MCF 10A (cell line): ENCODE measurements at regions of chr12 and their contacts with region 1.

Region 1: DNA sequence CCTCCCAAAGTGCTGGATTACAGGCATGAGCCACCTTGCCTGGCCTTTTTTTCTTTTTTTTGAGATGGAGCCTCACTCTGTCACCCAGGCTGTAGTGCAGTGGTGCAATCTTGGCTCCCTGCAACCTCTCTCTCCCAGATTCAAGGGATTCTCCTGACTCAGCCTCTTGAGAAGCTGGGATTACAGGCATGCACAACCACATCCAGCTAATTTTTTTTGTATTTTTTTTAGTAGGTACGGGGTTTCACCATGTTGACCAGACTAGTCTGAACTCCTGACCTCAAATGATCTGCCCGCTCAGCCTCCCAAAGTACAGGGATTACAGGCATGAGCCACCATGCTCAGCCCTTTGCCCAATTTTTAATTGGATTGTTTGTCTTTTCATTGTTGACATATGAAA is 58.0 kb downstream of the SINHCAF start:
- DNase-seq: peak; percentile 11
- H3K4me3 Mint-ChIP-seq: no peak overlapping the region
- H3K27ac Mint-ChIP-seq: no peak overlapping the region
- H3K4me1 Mint-ChIP-seq: no peaks in the 10 kb centered on the region
- H3K27me3 Mint-ChIP-seq: no peaks in the 10 kb centered on the region
- CTCF ChIP-seq: no peak

Region 2: DNA sequence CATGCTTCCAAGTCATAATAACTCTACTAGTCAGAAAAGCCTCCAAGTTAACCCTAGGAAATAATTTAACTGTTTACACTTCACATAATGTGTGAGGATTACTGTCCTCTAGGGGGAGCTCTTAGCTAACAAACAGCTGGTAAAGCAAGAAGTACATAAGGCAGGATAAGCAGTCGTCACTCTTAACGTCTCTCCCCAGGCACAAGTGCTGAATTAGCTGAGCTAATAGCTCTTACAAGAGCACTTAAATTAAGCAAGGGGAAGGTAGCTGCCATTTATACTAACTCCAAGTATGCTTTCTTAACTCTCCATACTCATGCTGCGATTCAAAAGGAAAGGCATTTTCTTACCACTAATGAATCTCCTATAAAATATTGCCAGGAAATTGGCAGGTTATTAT is 420.7 kb before region 1 on chr12:
- CTCF ChIA-PET with region 1: interaction called, 44 read pairs
- POLR2A ChIA-PET with region 1: interaction called, 4 read pairs
- intact Hi-C with region 1: loop called (anchors 1 kb)
- DNase-seq: peak; percentile 81
- H3K4me3 Mint-ChIP-seq: no peak overlapping the region
- H3K27ac Mint-ChIP-seq: no peak overlapping the region
- H3K4me1 Mint-ChIP-seq: peaks cover 7% of the 10 kb centered on the region
- H3K27me3 Mint-ChIP-seq: no peaks in the 10 kb centered on the region
- CTCF ChIP-seq: peak; percentile 87

Region 3: GRCh38 chr12:31238764-31239387 is 29.1 kb before region 1 on chr12:
- CTCF ChIA-PET with region 1: interaction called, 23 read pairs
- POLR2A ChIA-PET with region 1: no interaction called
- intact Hi-C with region 1: no loop called
- DNase-seq: peak; percentile 81
- H3K4me3 Mint-ChIP-seq: peak overlapping the region; percentile 46
- H3K27ac Mint-ChIP-seq: no peak overlapping the region
- H3K4me1 Mint-ChIP-seq: peaks cover 19% of the 10 kb centered on the region
- H3K27me3 Mint-ChIP-seq: peaks cover 49% of the 10 kb centered on the region
- CTCF ChIP-seq: peak; percentile 62

Region 4: GRCh38 chr12:31245822-31246469 is 22.0 kb before region 1 on chr12:
- CTCF ChIA-PET with region 1: interaction called, 65 read pairs
- POLR2A ChIA-PET with region 1: interaction called, 11 read pairs
- intact Hi-C with region 1: no loop called
- DNase-seq: no peak
- H3K4me3 Mint-ChIP-seq: no peak overlapping the region
- H3K27ac Mint-ChIP-seq: peak overlapping the region; percentile 44
- H3K4me1 Mint-ChIP-seq: peaks cover 6% of the 10 kb centered on the region
- H3K27me3 Mint-ChIP-seq: no peaks in the 10 kb centered on the region
- CTCF ChIP-seq: no peak

Region 5: GRCh38 chr12:31288381-31288780 is 20.4 kb after region 1 on chr12:
- CTCF ChIA-PET with region 1: interaction called, 31 read pairs
- POLR2A ChIA-PET with region 1: no interaction called
- intact Hi-C with region 1: no loop called
- DNase-seq: no peak
- H3K4me3 Mint-ChIP-seq: no peak overlapping the region
- H3K27ac Mint-ChIP-seq: no peak overlapping the region
- H3K4me1 Mint-ChIP-seq: no peaks in the 10 kb centered on the region
- H3K27me3 Mint-ChIP-seq: no peaks in the 10 kb centered on the region
- CTCF ChIP-seq: no peak

Region 6: GRCh38 chr12:31300341-31300740 is 32.4 kb after region 1 on chr12:
- CTCF ChIA-PET with region 1: interaction called, 10 read pairs
- POLR2A ChIA-PET with region 1: no interaction called
- intact Hi-C with region 1: no loop called
- DNase-seq: no peak
- H3K4me3 Mint-ChIP-seq: no peak overlapping the region
- H3K27ac Mint-ChIP-seq: no peak overlapping the region
- H3K4me1 Mint-ChIP-seq: peaks cover 21% of the 10 kb centered on the region
- H3K27me3 Mint-ChIP-seq: no peaks in the 10 kb centered on the region
- CTCF ChIP-seq: no peak

Region 7: DNA sequence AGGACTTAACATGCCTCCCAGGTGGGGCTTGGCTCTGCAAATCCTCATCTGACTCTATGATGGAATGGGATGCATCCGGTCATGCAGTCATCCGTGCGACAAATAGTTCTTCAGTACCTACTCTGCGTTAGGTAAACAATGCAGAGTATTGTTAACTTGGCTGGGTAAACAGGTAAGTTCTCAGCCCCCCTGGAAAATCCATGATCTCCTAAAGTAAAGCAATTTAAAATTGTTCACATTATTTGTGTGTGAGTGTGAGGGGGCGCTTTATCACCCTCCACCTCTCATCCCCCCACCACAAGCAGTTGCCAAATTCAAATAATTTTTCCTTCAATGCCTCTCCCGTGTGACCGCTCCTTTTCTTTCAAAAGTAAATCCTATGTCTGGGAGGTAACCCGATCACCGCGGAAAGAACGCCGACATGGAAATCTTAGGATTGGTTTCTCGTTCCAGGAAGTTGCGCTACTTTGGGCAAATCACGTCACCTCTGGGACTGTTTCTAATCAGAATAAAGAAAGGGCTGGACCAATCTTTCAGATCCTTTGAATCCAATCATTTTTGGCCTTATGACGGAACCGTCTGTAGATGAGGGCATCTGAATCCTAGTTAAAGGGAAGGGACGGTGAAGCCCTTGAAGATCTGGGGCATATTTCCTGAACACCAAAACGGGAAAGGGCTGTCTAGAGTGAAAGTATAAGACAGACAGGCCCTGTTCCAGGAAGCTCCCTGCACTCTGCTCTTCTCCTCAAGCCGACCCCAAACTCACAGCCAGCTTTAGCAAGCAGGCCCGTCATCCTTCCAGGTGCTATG is 102.0 kb after region 1 on chr12:
- CTCF ChIA-PET with region 1: interaction called, 5 read pairs
- POLR2A ChIA-PET with region 1: interaction called, 5 read pairs
- intact Hi-C with region 1: loop called (anchors 10 kb)
- DNase-seq: no peak
- H3K4me3 Mint-ChIP-seq: no peak overlapping the region
- H3K27ac Mint-ChIP-seq: no peak overlapping the region
- H3K4me1 Mint-ChIP-seq: no peaks in the 10 kb centered on the region
- H3K27me3 Mint-ChIP-seq: no peaks in the 10 kb centered on the region
- CTCF ChIP-seq: no peak